ENCODE measurements at regions of chr10 and their contacts with region 1.

Region 1: GRCh38 chr10:29712108-29712507 is 77.3 kb upstream of the SVIL start:
- DNase-seq: no peak
- ATAC-seq: no peak
- H3K4me3 Mint-ChIP-seq: no peak overlapping the region
- H3K27ac Mint-ChIP-seq: peak overlapping the region in 1 of 10 donors; percentile 2
- H3K4me1 Mint-ChIP-seq: peaks cover 27 to 55% (median 42%) of the 10 kb centered on the region in 4 donors
- H3K27me3 Mint-ChIP-seq: no peaks in the 10 kb centered on the region

Region 2: GRCh38 chr10:29627201-29628141 is 84.6 kb before region 1 on chr10:
- POLR2A ChIA-PET with region 1: interaction called, 10 read pairs
- DNase-seq: no peak
- ATAC-seq: no peak
- H3K4me3 Mint-ChIP-seq: no peak overlapping the region
- H3K27ac Mint-ChIP-seq: no peak overlapping the region
- H3K4me1 Mint-ChIP-seq: peaks cover 12 to 30% (median 23%) of the 10 kb centered on the region in 4 donors
- H3K27me3 Mint-ChIP-seq: no peaks in the 10 kb centered on the region